ENCODE measurements at regions of chr18 and their contacts with region 1.

Region 1: DNA sequence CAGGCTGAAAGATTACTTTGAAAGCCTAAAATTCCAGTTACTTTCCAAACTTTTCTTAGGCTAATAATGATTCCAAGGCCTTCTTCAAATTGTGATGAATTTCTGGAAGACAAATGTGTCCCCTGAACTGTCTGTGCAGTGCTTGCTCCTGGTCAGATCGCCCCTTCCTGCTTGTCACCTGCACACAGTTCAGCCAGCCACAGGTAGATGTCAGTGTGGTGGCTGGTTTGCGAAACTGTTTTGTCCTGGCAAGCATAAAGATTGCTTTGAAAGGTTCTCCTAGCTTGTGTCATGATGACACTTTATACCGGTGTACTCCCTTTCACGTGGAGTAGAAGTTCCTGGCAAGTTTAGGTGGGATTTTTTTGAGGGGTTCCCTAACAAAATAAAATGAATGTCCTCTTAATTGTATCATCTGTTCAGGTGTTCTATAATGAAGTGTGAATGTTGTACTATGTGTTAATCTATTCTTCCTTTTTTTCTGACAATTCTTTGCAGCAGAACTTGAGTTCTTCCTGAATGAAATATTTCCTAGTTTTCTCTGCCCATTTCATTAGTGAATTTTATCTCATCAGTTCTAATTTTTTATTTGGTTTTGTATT is 298.8 kb downstream of the ZNF407 start:
- DNase-seq: peak in 6 of 9 donors; percentile 19 to 45 (median 36)
- ATAC-seq: peak; percentile 76
- H3K4me3 ChIP-seq: no peak overlapping the region
- H3K4me3 Mint-ChIP-seq: no peak overlapping the region
- H3K27ac ChIP-seq: no peak overlapping the region
- H3K27ac Mint-ChIP-seq: peak overlapping the region in 2 of 9 donors; percentile 1 to 11
- H3K4me1 ChIP-seq: no peaks in the 10 kb centered on the region
- H3K4me1 Mint-ChIP-seq: peaks cover 0 to 21% (median 7%) of the 10 kb centered on the region in 7 donors
- H3K27me3 ChIP-seq: no peaks in the 10 kb centered on the region
- H3K27me3 Mint-ChIP-seq: no peaks in the 10 kb centered on the region

Region 2: DNA sequence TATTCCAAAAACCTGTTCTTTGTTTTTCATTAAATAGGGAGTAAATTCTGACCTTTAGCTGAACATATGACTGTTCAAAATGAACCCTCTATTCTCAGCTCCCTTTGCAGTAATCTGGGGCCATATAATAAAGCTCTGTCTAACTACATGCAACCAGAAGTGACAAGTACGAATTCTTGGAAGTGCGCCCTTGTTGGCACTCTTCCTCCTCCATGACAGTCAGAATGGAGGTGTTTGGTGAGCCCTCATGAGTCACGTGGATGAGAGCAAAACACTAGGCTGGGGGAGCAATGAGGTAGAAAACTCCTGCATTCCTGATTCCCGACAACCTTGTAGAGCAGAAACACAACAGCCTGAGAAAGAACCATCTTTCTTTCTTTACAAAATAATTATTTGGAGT is 1301.7 kb before region 1 on chr18:
- CTCF ChIA-PET with region 1: no interaction called
- POLR2A ChIA-PET with region 1: no interaction called
- intact Hi-C with region 1: no loop called
- DNase-seq: no peak
- ATAC-seq: no peak
- H3K4me3 ChIP-seq: no peak overlapping the region
- H3K4me3 Mint-ChIP-seq: no peak overlapping the region
- H3K27ac ChIP-seq: no peak overlapping the region
- H3K27ac Mint-ChIP-seq: no peak overlapping the region
- H3K4me1 ChIP-seq: no peaks in the 10 kb centered on the region
- H3K4me1 Mint-ChIP-seq: no peaks in the 10 kb centered on the region
- H3K27me3 ChIP-seq: no peaks in the 10 kb centered on the region
- H3K27me3 Mint-ChIP-seq: no peaks in the 10 kb centered on the region

Region 3: DNA sequence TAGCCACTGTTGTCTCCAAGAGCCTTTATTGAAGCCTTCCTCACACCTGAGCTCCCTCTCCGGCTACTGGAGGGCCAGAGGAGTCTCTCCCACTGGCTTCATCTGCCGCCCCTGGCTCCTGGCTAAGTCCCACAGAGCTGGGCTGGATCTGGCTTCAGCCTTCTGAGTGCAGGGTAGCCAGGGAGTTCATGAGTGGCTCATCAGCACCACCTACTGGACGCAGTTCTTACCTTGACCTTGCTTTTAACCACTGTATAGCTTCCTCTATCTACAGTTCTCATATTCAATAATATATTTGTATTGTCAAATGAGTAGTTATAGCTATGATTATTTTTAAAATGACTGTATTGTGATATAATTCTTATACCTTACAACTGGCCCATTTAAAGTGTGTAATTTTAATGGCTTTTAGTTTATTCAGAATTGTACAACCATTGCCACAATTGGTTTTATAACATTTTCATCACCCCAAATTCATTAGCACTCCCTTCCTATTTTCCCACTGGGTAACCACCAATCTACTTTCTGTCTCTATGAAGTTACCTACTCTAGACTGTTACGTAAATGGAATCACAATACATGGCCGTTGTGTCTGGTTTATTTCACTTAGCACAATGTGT is 344.4 kb before region 1 on chr18:
- CTCF ChIA-PET with region 1: no interaction called
- POLR2A ChIA-PET with region 1: no interaction called
- intact Hi-C with region 1: no loop called
- DNase-seq: peak; percentile 39 to 69 (median 63)
- ATAC-seq: peak; percentile 97
- H3K4me3 ChIP-seq: no peak overlapping the region
- H3K4me3 Mint-ChIP-seq: no peak overlapping the region
- H3K27ac ChIP-seq: no peak overlapping the region
- H3K27ac Mint-ChIP-seq: peak overlapping the region in 2 of 9 donors; percentile 3 to 70
- H3K4me1 ChIP-seq: no peaks in the 10 kb centered on the region
- H3K4me1 Mint-ChIP-seq: peaks cover 0 to 6% (median 0%) of the 10 kb centered on the region in 7 donors
- H3K27me3 ChIP-seq: no peaks in the 10 kb centered on the region
- H3K27me3 Mint-ChIP-seq: peaks cover 10 to 14% (median 13%) of the 10 kb centered on the region in 5 donors

Region 4: DNA sequence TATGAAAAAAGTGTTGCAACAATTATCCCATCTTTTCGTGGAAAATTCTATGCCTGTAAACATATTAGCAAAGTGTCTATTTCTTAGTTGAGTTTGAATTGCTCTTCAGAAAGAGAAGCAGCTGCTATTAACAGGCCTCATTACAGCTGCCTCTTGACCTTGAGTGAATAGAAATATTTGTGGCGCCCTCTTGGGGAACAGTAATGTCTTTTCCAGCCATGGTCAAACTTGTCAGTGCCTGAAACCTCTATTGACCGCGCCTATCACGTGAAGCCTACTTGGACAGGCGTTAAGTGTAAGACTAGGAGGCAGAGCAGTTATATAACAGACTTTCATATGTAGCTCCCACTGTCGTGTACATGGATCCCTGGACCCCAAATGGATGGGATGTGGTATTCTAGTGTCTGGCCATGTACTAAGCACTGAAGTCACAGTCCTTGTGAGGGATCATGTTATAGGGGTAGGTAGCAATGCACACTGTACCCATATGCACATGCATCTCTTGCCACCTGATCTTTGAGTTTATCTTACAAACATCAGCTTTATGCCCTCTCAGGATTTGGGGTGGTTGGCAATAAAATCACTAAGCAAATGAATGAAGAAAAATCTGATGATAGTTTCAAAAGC is 67.4 kb after region 1 on chr18:
- CTCF ChIA-PET with region 1: no interaction called
- POLR2A ChIA-PET with region 1: no interaction called
- intact Hi-C with region 1: loop called (anchors 2 to 5 kb)
- DNase-seq: no peak
- ATAC-seq: peak; percentile 59
- H3K4me3 ChIP-seq: no peak overlapping the region
- H3K4me3 Mint-ChIP-seq: no peak overlapping the region
- H3K27ac ChIP-seq: no peak overlapping the region
- H3K27ac Mint-ChIP-seq: no peak overlapping the region
- H3K4me1 ChIP-seq: no peaks in the 10 kb centered on the region
- H3K4me1 Mint-ChIP-seq: peaks cover 0 to 8% (median 0%) of the 10 kb centered on the region in 7 donors
- H3K27me3 ChIP-seq: no peaks in the 10 kb centered on the region
- H3K27me3 Mint-ChIP-seq: no peaks in the 10 kb centered on the region

Region 5: GRCh38 chr18:75247611-75248421 is 351.3 kb after region 1 on chr18:
- CTCF ChIA-PET with region 1: interaction called, 3 read pairs
- POLR2A ChIA-PET with region 1: no interaction called
- intact Hi-C with region 1: loop called (anchors 1 to 5 kb)
- DNase-seq: peak in 7 of 9 donors; percentile 43 to 66 (median 58)
- ATAC-seq: peak; percentile 62
- H3K4me3 ChIP-seq: peak overlapping the region; percentile 43
- H3K4me3 Mint-ChIP-seq: peak overlapping the region; percentile 86 to 93 (median 90)
- H3K27ac ChIP-seq: peak overlapping the region; percentile 82
- H3K27ac Mint-ChIP-seq: peak overlapping the region; percentile 91 to 99 (median 96)
- H3K4me1 ChIP-seq: peaks cover 31 to 43% of the 10 kb centered on the region in 2 donors
- H3K4me1 Mint-ChIP-seq: peaks cover 44 to 94% (median 87%) of the 10 kb centered on the region in 7 donors
- H3K27me3 ChIP-seq: no peaks in the 10 kb centered on the region
- H3K27me3 Mint-ChIP-seq: no peaks in the 10 kb centered on the region

Region 6: DNA sequence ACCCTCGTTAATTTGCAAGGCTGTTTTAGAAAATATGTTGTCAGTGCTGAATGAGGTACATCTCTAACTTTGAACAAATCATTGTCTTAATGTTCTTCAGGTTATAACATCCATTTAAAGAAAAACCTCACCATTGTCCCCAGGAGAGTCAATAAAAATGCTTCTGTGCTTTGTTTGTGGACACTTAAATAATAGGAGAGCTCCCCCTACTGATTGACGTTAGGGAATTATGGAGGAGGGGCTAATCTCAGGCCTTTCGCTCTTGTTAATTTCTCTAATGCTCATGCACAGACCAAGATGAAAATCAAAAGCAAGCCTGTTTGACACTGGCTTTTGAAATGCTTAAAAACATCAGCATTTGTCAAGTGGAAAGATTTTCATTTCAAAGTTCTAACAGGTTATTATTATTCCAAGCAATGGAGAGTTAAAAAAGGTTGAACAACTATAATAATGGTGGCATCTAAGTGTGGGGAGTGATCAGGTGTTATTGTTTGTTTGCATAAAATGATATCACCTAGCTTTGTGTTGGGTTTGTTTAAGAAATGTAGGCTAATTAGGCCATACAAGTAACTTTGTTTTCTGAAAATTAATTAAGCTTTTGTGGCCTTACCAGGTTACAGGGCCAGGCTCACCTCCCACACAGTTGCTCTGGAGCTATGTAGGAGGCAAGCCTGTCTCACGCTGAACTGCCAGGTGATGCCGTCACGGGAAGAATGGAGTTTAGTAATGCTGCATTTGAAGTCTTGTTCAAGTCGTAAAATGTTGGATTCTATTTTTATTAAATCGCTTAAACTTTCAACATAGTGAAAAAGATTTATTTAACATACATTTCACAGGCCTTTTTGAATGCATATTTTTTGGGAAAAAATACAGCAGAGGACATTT is 582.7 kb after region 1 on chr18:
- CTCF ChIA-PET with region 1: interaction called, 10 read pairs
- POLR2A ChIA-PET with region 1: no interaction called
- intact Hi-C with region 1: loop called (anchors 1 to 5 kb)
- DNase-seq: peak in 6 of 9 donors; percentile 15 to 56 (median 49)
- ATAC-seq: peak; percentile 69
- H3K4me3 ChIP-seq: no peak overlapping the region
- H3K4me3 Mint-ChIP-seq: no peak overlapping the region
- H3K27ac ChIP-seq: no peak overlapping the region
- H3K27ac Mint-ChIP-seq: no peak overlapping the region
- H3K4me1 ChIP-seq: no peaks in the 10 kb centered on the region
- H3K4me1 Mint-ChIP-seq: peaks cover 0 to 10% (median 6%) of the 10 kb centered on the region in 7 donors
- H3K27me3 ChIP-seq: peaks cover 0 to 3% of the 10 kb centered on the region in 2 donors
- H3K27me3 Mint-ChIP-seq: peaks cover 9 to 19% (median 13%) of the 10 kb centered on the region in 5 donors